ENCODE measurements at regions of chr2 and their contacts with region 1.

Region 1: GRCh38 chr2:11719230-11719977 is 27.0 kb upstream of the LPIN1 start:
- DNase-seq: no peak
- ATAC-seq: no peak
- H3K4me3 ChIP-seq: peak overlapping the region in 1 of 5 experiments; percentile 27
- H3K4me3 Mint-ChIP-seq: peak overlapping the region; percentile 38
- H3K27ac ChIP-seq: no peak overlapping the region
- H3K27ac Mint-ChIP-seq: no peak overlapping the region
- H3K4me1 ChIP-seq: peaks cover 16 to 18% of the 10 kb centered on the region in 2 donors
- H3K4me1 Mint-ChIP-seq: peaks cover 19% of the 10 kb centered on the region
- H3K27me3 ChIP-seq: no peaks in the 10 kb centered on the region
- H3K27me3 Mint-ChIP-seq: peaks cover 34% of the 10 kb centered on the region
- CTCF ChIP-seq: no peak

Region 2: GRCh38 chr2:11669454-11670291 is 49.7 kb before region 1 on chr2 and contains the start of gene NTSR2:
- CTCF ChIA-PET with region 1: no interaction called
- POLR2A ChIA-PET with region 1: no interaction called
- intact Hi-C with region 1: no loop called
- DNase-seq: peak; percentile 41
- ATAC-seq: peak; percentile 43
- H3K4me3 ChIP-seq: no peak within 1 kb of the TSS
- H3K4me3 Mint-ChIP-seq: no peak within 1 kb of the TSS
- H3K27ac ChIP-seq: no peak within 1 kb of the TSS
- H3K27ac Mint-ChIP-seq: no peak within 1 kb of the TSS
- H3K4me1 ChIP-seq: peaks cover 6 to 9% of the 10 kb centered on the region in 2 donors
- H3K4me1 Mint-ChIP-seq: peaks cover 13% of the 10 kb centered on the region
- H3K27me3 ChIP-seq: peaks cover 0 to 21% (median 10%) of the 10 kb centered on the region in 4 experiments
- H3K27me3 Mint-ChIP-seq: peaks cover 35% of the 10 kb centered on the region
- CTCF ChIP-seq: no peak
- total RNA-seq, gene NTSR2: not detected in 2 replicates

Region 3: GRCh38 chr2:11784747-11785610 is 65.6 kb after region 1 on chr2:
- CTCF ChIA-PET with region 1: interaction called, 10 read pairs
- POLR2A ChIA-PET with region 1: no interaction called
- intact Hi-C with region 1: no loop called
- DNase-seq: peak; percentile 63
- ATAC-seq: peak; percentile 41
- H3K4me3 ChIP-seq: no peak overlapping the region
- H3K4me3 Mint-ChIP-seq: no peak overlapping the region
- H3K27ac ChIP-seq: no peak overlapping the region
- H3K27ac Mint-ChIP-seq: no peak overlapping the region
- H3K4me1 ChIP-seq: no peaks in the 10 kb centered on the region
- H3K4me1 Mint-ChIP-seq: no peaks in the 10 kb centered on the region
- H3K27me3 ChIP-seq: no peaks in the 10 kb centered on the region
- H3K27me3 Mint-ChIP-seq: no peaks in the 10 kb centered on the region
- CTCF ChIP-seq: peak; percentile 98